ENCODE measurements at regions of chr15 and their contacts with region 1.

Region 1: GRCh38 chr15:88620995-88621772 is at the start of gene AEN:
- DNase-seq: peak; percentile 97
- ATAC-seq: peak; percentile 83
- H3K4me3 Mint-ChIP-seq: peak within 1 kb of the TSS; percentile 90
- H3K27ac Mint-ChIP-seq: peak within 1 kb of the TSS; percentile 94
- H3K4me1 Mint-ChIP-seq: peaks cover 41% of the 10 kb centered on the region
- H3K27me3 Mint-ChIP-seq: peaks cover 5% of the 10 kb centered on the region
- total RNA-seq, gene AEN: 42.8 to 52.9 TPM

Region 2: DNA sequence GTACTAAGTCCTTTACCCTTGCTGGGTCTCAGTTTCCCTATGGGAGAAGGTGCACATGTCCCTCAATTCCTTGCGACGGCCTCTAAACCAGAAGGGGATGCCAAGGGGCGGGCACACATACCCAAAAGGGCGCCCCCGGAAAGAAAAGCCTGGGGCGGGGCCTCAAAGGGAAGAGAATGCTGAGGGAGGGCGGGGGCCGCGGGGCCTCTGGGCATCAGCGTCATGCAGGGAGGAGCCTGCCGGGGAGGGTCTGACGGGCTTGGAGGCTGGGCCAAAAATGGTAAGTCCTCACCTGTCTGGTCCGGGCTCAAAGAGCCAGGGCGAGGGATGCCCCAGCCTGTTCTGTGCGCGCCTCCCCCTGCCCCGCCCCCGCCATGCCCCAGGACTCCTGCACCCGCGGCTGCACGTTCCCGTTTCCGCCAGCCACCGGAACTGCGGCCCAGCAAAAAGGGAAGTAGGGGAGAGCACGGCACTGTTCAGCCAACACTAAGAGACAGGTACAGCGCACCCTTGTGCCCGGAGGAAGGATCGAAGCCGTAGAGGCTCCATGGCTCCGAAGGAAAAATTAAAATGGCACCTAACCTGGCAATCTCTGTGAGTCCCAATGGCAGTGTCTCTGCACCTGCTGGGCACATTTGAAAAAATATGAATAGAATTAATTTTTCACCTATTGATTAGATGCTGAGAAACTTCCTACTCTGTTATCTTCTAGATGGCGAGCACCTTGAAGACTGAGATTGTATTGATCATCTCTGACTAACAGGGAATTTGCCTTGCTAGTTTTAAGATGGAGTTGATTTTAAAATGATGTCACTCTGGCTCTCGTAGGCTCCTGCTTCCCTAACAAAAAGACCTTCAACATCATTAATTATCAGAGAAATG is 74.7 kb before region 1 on chr15 and contains the start of gene DET1:
- CTCF ChIA-PET with region 1: no interaction called
- POLR2A ChIA-PET with region 1: no interaction called
- intact Hi-C with region 1: loop called (anchors 1 kb)
- DNase-seq: peak; percentile 98
- ATAC-seq: peak; percentile 97
- H3K4me3 Mint-ChIP-seq: peak within 1 kb of the TSS; percentile 83
- H3K27ac Mint-ChIP-seq: peak within 1 kb of the TSS; percentile 91
- H3K4me1 Mint-ChIP-seq: peaks cover 13% of the 10 kb centered on the region
- H3K27me3 Mint-ChIP-seq: no peaks in the 10 kb centered on the region
- total RNA-seq, gene DET1: 2.7 to 3.0 TPM

Region 3: DNA sequence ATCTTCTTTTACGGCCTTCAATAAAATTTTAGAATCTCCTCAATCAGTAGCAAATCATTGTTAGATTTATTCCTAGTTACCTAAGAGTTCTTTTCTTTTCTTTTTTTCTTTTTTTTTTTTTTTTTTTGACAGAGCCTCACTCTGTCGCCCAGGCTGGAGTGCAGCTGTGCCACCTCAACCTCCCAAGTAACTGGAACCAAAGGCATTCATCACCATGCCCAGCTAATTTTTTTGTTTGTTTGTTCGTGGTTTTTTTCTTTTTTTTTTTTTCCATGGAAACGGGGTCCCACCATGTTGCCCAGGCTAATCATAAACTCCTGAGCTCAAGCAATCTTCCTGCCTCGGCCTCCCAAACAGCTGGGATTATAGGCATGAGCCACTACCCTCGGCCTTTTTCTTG is 30.4 kb before region 1 on chr15:
- CTCF ChIA-PET with region 1: no interaction called
- POLR2A ChIA-PET with region 1: no interaction called
- intact Hi-C with region 1: no loop called
- DNase-seq: no peak
- ATAC-seq: no peak
- H3K4me3 Mint-ChIP-seq: no peak overlapping the region
- H3K27ac Mint-ChIP-seq: no peak overlapping the region
- H3K4me1 Mint-ChIP-seq: peaks cover 4% of the 10 kb centered on the region
- H3K27me3 Mint-ChIP-seq: peaks cover 2% of the 10 kb centered on the region

Region 4: DNA sequence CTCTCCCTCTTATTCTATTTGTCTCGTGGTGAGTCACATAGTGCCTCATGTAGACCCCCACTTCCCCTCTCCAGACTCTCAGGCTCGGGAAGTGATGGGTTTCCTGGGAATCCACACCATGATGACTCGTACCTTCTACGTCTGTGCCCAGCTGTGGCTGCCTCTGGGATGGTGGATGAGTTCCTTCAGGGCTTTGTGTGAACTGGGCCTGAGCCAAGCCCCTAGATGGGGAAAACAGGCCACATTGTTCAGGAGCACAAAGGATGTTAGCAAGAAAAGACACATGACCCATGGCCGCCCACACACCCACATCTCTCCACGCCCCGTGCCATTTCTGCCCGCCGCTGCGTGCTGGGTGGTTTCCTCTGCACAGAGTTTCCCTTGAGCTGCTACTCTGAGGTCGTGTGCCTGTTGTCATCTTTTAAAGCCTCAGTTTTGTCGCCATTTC is 28.1 kb after region 1 on chr15:
- CTCF ChIA-PET with region 1: interaction called, 6 read pairs
- POLR2A ChIA-PET with region 1: interaction called, 3 read pairs
- intact Hi-C with region 1: loop called in 1 of 2 experiments (anchors 1 kb)
- DNase-seq: peak; percentile 92
- ATAC-seq: peak; percentile 87
- H3K4me3 Mint-ChIP-seq: peak overlapping the region; percentile 58
- H3K27ac Mint-ChIP-seq: peak overlapping the region; percentile 98
- H3K4me1 Mint-ChIP-seq: peaks cover 74% of the 10 kb centered on the region
- H3K27me3 Mint-ChIP-seq: no peaks in the 10 kb centered on the region

Region 5: GRCh38 chr15:88701561-88702095 is 80.4 kb after region 1 on chr15:
- CTCF ChIA-PET with region 1: no interaction called
- POLR2A ChIA-PET with region 1: no interaction called
- intact Hi-C with region 1: loop called in 1 of 2 experiments (anchors 1 kb)
- DNase-seq: peak; percentile 45
- ATAC-seq: peak; percentile 61
- H3K4me3 Mint-ChIP-seq: no peak overlapping the region
- H3K27ac Mint-ChIP-seq: no peak overlapping the region
- H3K4me1 Mint-ChIP-seq: peaks cover 8% of the 10 kb centered on the region
- H3K27me3 Mint-ChIP-seq: peaks cover 15% of the 10 kb centered on the region

Region 6: GRCh38 chr15:88897456-88898194 is 276.4 kb after region 1 on chr15:
- CTCF ChIA-PET with region 1: interaction called, 5 read pairs
- POLR2A ChIA-PET with region 1: no interaction called
- intact Hi-C with region 1: loop called (anchors 2 kb)
- DNase-seq: peak; percentile 86
- ATAC-seq: peak; percentile 80
- H3K4me3 Mint-ChIP-seq: no peak overlapping the region
- H3K27ac Mint-ChIP-seq: no peak overlapping the region
- H3K4me1 Mint-ChIP-seq: peaks cover 35% of the 10 kb centered on the region
- H3K27me3 Mint-ChIP-seq: no peaks in the 10 kb centered on the region

Region 7: DNA sequence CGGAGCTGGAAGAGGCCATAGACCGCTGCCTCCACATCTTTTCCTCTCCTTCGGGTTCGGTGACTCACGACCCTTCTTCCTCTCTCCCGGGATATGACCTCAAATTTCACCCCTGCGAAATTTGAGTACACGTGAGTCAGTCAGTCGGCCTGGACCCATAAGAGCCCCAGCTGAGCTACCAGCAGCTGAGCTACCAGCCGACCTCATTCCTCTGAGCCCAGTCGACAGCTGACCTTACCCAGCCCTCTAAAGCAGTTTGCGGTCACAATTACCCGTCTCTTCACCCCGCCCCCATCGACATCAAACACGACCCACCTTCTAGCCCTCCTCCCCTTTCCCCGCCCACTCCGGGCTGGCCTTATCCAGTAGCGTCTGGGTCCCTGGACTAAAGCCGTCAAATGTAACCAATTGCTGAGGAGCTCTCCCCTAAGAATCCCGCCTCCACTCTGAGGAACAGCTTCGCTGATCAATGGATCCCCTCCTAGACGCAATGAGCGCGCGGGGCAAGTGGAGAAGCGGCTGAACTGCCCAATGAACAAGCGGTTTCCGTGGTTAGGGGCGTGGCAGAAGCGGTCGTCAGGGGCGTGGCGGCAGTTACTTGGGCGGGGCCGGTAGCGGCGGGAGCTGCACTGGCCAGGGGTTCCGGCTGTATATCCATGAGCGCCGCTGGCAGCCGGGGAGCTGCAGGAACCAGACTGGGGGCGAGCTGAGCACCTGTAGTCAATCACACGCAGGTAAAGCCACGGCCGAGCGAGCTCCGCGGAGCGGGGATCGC is 466.8 kb after region 1 on chr15 and contains the start of gene ABHD2:
- CTCF ChIA-PET with region 1: no interaction called
- POLR2A ChIA-PET with region 1: no interaction called
- intact Hi-C with region 1: loop called (anchors 1 to 2 kb)
- DNase-seq: peak; percentile 99
- ATAC-seq: peak; percentile 98
- H3K4me3 Mint-ChIP-seq: no peak within 1 kb of the TSS
- H3K27ac Mint-ChIP-seq: peak within 1 kb of the TSS; percentile 9
- H3K4me1 Mint-ChIP-seq: peaks cover 36% of the 10 kb centered on the region
- H3K27me3 Mint-ChIP-seq: no peaks in the 10 kb centered on the region
- total RNA-seq, gene ABHD2: 41.5 to 52.1 TPM

Region 8: GRCh38 chr15:89334510-89335288 is 713.5 kb after region 1 on chr15 and contains the start of gene POLG:
- CTCF ChIA-PET with region 1: interaction called, 4 read pairs
- POLR2A ChIA-PET with region 1: no interaction called
- intact Hi-C with region 1: loop called in 1 of 2 experiments (anchors 5 kb)
- DNase-seq: peak; percentile 99
- ATAC-seq: peak; percentile 92
- H3K4me3 Mint-ChIP-seq: peak within 1 kb of the TSS; percentile 80
- H3K27ac Mint-ChIP-seq: peak within 1 kb of the TSS; percentile 87
- H3K4me1 Mint-ChIP-seq: peaks cover 56% of the 10 kb centered on the region
- H3K27me3 Mint-ChIP-seq: peaks cover 2% of the 10 kb centered on the region
- total RNA-seq, gene POLG: 63.2 to 80.4 TPM